Activated CD8-positive, alpha-beta T cell treated with anti-CD3 and anti-CD28 coated beads, Interleukin-2, amount 10 ng/mL, durations not matched to agents 7 days and 5 days (primary cell): ENCODE measurements at regions of chr2 and their contacts with region 1.

Region 1: DNA sequence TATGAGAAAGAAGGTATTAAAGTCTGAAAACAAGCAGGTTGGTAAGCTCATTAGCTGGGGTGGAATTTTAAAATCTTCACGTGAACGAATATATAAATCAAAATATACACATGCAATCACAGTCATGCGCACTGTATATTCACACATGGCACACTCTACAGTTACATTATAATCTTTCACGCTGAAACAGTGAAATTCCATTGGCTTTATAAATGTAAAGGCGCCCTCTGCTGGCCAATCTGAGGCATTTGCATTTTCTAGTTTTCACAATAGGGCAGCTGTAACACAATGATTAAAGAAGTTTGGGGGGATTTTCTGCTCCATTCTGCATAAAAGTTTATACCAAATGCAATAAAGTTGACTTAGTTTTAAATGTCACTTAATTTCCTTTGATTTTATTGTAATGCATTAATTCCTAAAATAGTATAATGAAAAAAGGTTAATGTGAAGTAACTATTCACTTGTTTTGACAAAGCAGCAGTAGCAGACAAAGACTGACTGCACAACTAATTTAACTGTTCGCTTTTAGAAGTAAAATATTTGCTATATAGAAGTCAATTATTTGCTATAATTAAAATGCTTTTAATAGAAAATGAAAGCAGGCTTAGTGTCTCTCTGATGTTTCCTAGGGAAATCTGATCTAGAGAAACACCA is 17.2 kb downstream of the IFIH1 start:
- DNase-seq: peak; percentile 76
- ATAC-seq: peak; percentile 75
- H3K4me3 Mint-ChIP-seq: no peak overlapping the region
- H3K27ac Mint-ChIP-seq: no peak overlapping the region
- H3K4me1 Mint-ChIP-seq: no peaks in the 10 kb centered on the region
- H3K27me3 Mint-ChIP-seq: no peaks in the 10 kb centered on the region

Region 2: DNA sequence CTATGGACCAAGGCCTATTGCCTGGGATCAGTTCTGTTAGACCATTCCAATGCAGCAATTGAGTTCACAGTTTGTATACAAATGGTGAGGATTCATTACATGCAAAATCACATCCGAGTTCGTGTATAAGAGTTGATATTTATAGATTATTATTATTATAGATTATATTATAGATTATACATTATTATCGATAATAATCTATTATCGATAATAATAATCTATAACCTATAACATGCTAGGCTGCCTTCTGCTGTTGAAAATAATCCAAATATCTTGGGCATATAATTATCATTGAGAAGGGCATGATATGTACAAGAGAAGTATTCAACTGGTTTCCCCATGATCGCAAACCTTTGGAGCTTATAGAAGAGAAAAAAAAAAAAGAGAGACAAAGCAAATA is 362.9 kb before region 1 on chr2:
- CTCF ChIA-PET with region 1: no interaction called
- POLR2A ChIA-PET with region 1: no interaction called
- DNase-seq: no peak
- ATAC-seq: no peak
- H3K4me3 Mint-ChIP-seq: no peak overlapping the region
- H3K27ac Mint-ChIP-seq: no peak overlapping the region
- H3K4me1 Mint-ChIP-seq: peaks cover 3% of the 10 kb centered on the region
- H3K27me3 Mint-ChIP-seq: peaks cover 14% of the 10 kb centered on the region

Region 3: DNA sequence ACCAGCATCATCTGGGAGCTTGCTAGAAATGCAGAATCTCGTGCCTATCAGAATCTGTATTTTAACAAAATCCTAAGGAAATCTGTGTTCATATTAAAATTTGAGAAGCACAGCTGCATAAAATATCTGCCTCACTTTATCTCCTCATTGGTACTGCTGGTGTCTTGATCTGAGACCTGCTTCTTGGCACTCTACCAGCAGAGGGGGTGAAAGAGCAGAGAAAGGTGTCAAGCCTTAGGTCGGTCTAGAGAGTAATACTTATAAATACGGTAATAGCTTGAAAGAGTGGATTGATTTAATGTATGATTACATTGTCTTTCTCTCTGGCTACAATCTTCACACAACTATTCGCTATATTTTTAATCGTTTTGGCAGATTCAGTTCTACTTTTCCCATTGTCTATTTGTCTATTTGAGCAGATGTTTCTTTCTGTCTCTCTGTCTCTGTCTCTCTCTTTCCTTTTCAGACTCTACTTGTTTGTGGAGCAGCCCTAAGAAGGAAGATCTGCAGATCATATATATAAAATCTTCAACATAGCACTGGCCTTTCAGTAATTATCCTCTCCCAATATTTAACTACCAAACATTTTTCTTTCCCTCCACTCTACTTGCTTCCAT is 147.6 kb before region 1 on chr2:
- CTCF ChIA-PET with region 1: interaction called, 51 read pairs
- POLR2A ChIA-PET with region 1: no interaction called
- DNase-seq: peak; percentile 76
- ATAC-seq: peak; percentile 92
- H3K4me3 Mint-ChIP-seq: no peak overlapping the region
- H3K27ac Mint-ChIP-seq: no peak overlapping the region
- H3K4me1 Mint-ChIP-seq: peaks cover 2% of the 10 kb centered on the region
- H3K27me3 Mint-ChIP-seq: peaks cover 36% of the 10 kb centered on the region

Region 4: DNA sequence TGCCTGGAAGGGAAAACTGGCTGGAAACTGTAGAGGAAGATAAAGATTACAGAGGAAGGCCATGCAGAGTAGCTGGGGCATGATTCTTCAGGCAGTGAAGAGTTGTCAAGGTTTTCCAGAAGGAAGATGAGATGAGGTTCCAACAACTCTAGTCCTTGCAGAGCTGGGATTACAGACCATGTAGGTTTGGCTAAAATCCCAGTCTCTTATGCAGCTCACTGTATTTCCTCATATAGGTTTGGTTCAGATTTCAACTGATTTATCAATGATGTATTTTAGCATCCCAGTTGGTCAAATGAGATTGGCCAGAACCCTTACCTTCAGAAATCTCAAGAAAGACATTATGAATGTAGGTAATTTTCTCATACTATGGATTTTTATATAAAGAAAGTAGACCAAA is 74.4 kb before region 1 on chr2:
- CTCF ChIA-PET with region 1: interaction called, 253 read pairs
- POLR2A ChIA-PET with region 1: no interaction called
- DNase-seq: no peak
- ATAC-seq: no peak
- H3K4me3 Mint-ChIP-seq: no peak overlapping the region
- H3K27ac Mint-ChIP-seq: no peak overlapping the region
- H3K4me1 Mint-ChIP-seq: no peaks in the 10 kb centered on the region
- H3K27me3 Mint-ChIP-seq: peaks cover 39% of the 10 kb centered on the region

Region 5: DNA sequence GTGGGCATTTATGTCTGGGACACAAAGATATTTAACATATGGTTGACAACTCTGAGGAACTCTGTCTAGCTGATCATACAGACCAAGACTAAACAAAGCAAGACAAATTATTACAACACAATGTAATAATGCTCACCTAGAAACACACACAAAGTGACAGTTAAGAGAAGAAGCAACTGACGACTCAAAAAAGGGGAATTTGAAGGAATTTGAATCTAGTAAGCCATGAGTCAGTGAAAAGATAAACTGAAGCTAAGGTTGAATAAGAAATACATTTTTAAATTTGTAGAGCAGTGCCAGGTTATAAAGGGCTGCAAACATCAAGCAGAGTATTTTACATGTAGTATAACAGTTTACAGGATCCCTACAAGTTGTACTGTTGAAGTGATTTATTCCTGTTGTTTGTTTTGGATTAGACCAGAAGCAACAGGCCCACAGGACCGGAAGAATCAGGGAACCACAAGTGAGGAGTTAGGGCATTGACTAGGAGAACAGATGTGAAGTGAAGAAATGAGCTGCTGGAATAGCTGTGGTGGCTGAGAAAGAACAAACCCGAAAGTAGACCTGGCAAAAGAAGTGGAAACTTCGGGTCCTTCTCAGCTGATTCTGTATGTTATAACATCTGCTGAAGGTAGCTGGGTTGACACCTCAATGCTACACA is 18.4 kb before region 1 on chr2:
- CTCF ChIA-PET with region 1: interaction called, 27 read pairs
- POLR2A ChIA-PET with region 1: no interaction called
- DNase-seq: no peak
- ATAC-seq: no peak
- H3K4me3 Mint-ChIP-seq: no peak overlapping the region
- H3K27ac Mint-ChIP-seq: no peak overlapping the region
- H3K4me1 Mint-ChIP-seq: no peaks in the 10 kb centered on the region
- H3K27me3 Mint-ChIP-seq: no peaks in the 10 kb centered on the region

Region 6: GRCh38 chr2:162333968-162334367 is 32.7 kb after region 1 on chr2:
- CTCF ChIA-PET with region 1: interaction called, 10 read pairs
- POLR2A ChIA-PET with region 1: no interaction called
- DNase-seq: peak; percentile 41
- ATAC-seq: peak; percentile 63
- H3K4me3 Mint-ChIP-seq: no peak overlapping the region
- H3K27ac Mint-ChIP-seq: no peak overlapping the region
- H3K4me1 Mint-ChIP-seq: peaks cover 1% of the 10 kb centered on the region
- H3K27me3 Mint-ChIP-seq: no peaks in the 10 kb centered on the region